ENCODE measurements at regions of chr7 and their contacts with region 1.

Region 1: DNA sequence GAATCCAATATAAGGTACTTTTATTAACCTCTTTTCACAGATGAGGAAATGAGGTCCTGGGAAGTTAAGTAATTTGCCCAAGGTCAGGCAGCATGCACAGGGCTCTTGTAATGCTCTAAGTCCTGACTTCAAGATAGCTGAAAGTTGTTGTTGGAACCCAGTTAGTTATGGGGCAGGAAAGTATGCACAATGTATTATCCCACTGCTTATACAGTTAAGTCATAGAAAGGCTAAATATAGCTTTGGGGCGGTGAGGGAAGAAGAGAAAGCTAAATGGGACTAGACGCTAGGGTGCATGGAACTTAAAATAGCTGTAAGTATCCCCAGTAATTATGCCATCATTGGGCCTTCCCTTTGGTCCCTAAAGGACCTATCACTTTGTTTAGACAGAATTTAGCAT is 9.2 kb downstream of the GLCCI1 start:
- DNase-seq: no peak
- ATAC-seq: no peak
- H3K4me3 ChIP-seq: no peak overlapping the region
- H3K4me3 Mint-ChIP-seq: no peak overlapping the region
- H3K27ac ChIP-seq: no peak overlapping the region
- H3K27ac Mint-ChIP-seq: peak overlapping the region; percentile 55
- H3K4me1 ChIP-seq: peaks cover 20% of the 10 kb centered on the region
- H3K4me1 Mint-ChIP-seq: peaks cover 89% of the 10 kb centered on the region
- H3K27me3 ChIP-seq: no peaks in the 10 kb centered on the region
- H3K27me3 Mint-ChIP-seq: no peaks in the 10 kb centered on the region
- CTCF ChIP-seq: no peak

Region 2: GRCh38 chr7:7989133-7989984 is 11.6 kb after region 1 on chr7:
- CTCF ChIA-PET with region 1: interaction called, 12 read pairs
- POLR2A ChIA-PET with region 1: interaction called, 8 read pairs
- intact Hi-C with region 1: loop called in 1 of 2 experiments (anchors 2 kb)
- DNase-seq: peak in 2 of 14 experiments; percentile 24 to 40
- ATAC-seq: peak; percentile 48
- H3K4me3 ChIP-seq: peak overlapping the region; percentile 34
- H3K4me3 Mint-ChIP-seq: peak overlapping the region; percentile 77
- H3K27ac ChIP-seq: peak overlapping the region in 1 of 2 donors; percentile 38
- H3K27ac Mint-ChIP-seq: peak overlapping the region; percentile 68
- H3K4me1 ChIP-seq: no peaks in the 10 kb centered on the region
- H3K4me1 Mint-ChIP-seq: peaks cover 74% of the 10 kb centered on the region
- H3K27me3 ChIP-seq: no peaks in the 10 kb centered on the region
- H3K27me3 Mint-ChIP-seq: no peaks in the 10 kb centered on the region
- CTCF ChIP-seq: no peak

Region 3: GRCh38 chr7:8184221-8184620 is 206.4 kb after region 1 on chr7:
- CTCF ChIA-PET with region 1: no interaction called
- POLR2A ChIA-PET with region 1: interaction called, 3 read pairs
- intact Hi-C with region 1: loop called in 1 of 2 experiments (anchors 5 kb)
- DNase-seq: no peak
- ATAC-seq: no peak
- H3K4me3 ChIP-seq: no peak overlapping the region
- H3K4me3 Mint-ChIP-seq: no peak overlapping the region
- H3K27ac ChIP-seq: no peak overlapping the region
- H3K27ac Mint-ChIP-seq: no peak overlapping the region
- H3K4me1 ChIP-seq: peaks cover 5% of the 10 kb centered on the region
- H3K4me1 Mint-ChIP-seq: peaks cover 41% of the 10 kb centered on the region
- H3K27me3 ChIP-seq: no peaks in the 10 kb centered on the region
- H3K27me3 Mint-ChIP-seq: no peaks in the 10 kb centered on the region
- CTCF ChIP-seq: no peak